ENCODE measurements at regions of chr5 and their contacts with region 1.

Region 1: GRCh38 chr5:431001-431710 is 11.8 kb upstream of the EXOC3 start:
- DNase-seq: peak; percentile 59 to 92
- ATAC-seq: peak; percentile 93 to 98
- H3K4me3 ChIP-seq: no peak overlapping the region
- H3K27ac ChIP-seq: no peak overlapping the region
- H3K4me1 ChIP-seq: no peaks in the 10 kb centered on the region
- CTCF ChIP-seq: peak; percentile 45; the same call in 2 of the 3 replicates
- EP300 ChIP-seq: no peak
- POLR2A ChIP-seq: no peak
- RAD21 ChIP-seq: peak; percentile 57 to 71; a peak in 4 of 5 replicates

Region 2: GRCh38 chr5:308672-309271 is 122.4 kb before region 1 on chr5:
- CTCF ChIA-PET with region 1: interaction called, 11 read pairs
- POLR2A ChIA-PET with region 1: no interaction called
- DNase-seq: peak in 1 of 2 experiments; percentile 29
- ATAC-seq: peak; percentile 67 to 83; a peak in 4 of 6 replicates
- H3K4me3 ChIP-seq: no peak overlapping the region
- H3K27ac ChIP-seq: no peak overlapping the region
- H3K4me1 ChIP-seq: no peaks in the 10 kb centered on the region
- CTCF ChIP-seq: no peak
- EP300 ChIP-seq: no peak
- POLR2A ChIP-seq: no peak
- RAD21 ChIP-seq: no peak

Region 3: DNA sequence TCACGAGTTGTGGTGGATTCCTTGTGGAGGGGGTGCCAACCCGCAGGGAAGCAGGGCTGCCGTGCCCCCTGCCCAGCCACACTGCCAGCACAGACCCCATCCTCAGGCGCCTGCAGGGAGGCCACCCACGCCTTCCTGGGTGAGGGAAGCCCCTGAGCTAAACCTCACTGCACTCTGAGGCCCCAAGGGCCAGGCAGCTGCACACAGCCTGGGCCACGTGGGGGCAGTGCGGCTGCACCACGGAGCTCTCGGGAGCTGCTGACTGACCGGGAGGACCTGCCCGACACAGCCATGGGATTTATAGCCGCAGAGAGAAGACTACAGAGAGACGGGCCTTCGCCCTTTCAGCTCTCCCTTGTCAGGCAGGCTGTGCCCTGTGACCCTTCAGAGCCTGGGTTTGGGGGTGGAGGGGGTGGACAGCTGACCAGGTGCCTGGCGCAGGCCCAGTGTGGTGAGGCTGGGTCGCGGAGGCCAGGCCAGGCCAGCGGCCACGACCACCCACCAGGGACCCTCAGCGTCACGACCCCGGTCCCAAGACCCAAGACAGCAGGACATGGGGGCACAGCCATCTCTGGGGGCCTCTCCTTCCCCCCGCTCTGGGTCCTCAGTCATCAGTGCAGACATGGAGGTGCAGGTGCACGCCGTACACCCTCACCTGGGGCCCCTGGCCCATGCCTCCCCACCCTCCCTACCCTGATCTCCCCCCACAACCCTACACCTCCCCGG is 113.9 kb before region 1 on chr5:
- CTCF ChIA-PET with region 1: interaction called, 186 read pairs
- POLR2A ChIA-PET with region 1: no interaction called
- DNase-seq: peak; percentile 82 to 88
- ATAC-seq: peak; percentile 75 to 90
- H3K4me3 ChIP-seq: no peak overlapping the region
- H3K27ac ChIP-seq: peak overlapping the region; percentile 33 to 87; a peak in 4 of 6 replicates
- H3K4me1 ChIP-seq: peaks cover 24% of the 10 kb centered on the region
- CTCF ChIP-seq: peak; percentile 69
- EP300 ChIP-seq: no peak
- POLR2A ChIP-seq: no peak
- RAD21 ChIP-seq: peak; percentile 81 to 86

Region 4: GRCh38 chr5:337563-338130 is 93.5 kb before region 1 on chr5:
- CTCF ChIA-PET with region 1: interaction called, 29 read pairs
- POLR2A ChIA-PET with region 1: no interaction called
- DNase-seq: peak; percentile 70 to 77
- ATAC-seq: peak; percentile 99 to 100
- H3K4me3 ChIP-seq: no peak overlapping the region
- H3K27ac ChIP-seq: peak overlapping the region in 1 of 2 experiments; percentile 42; a peak in 1 of 6 replicates
- H3K4me1 ChIP-seq: no peaks in the 10 kb centered on the region
- CTCF ChIP-seq: peak; percentile 50
- EP300 ChIP-seq: no peak
- POLR2A ChIP-seq: no peak
- RAD21 ChIP-seq: peak; percentile 14 to 41; a peak in 1 of 5 replicates

Region 5: DNA sequence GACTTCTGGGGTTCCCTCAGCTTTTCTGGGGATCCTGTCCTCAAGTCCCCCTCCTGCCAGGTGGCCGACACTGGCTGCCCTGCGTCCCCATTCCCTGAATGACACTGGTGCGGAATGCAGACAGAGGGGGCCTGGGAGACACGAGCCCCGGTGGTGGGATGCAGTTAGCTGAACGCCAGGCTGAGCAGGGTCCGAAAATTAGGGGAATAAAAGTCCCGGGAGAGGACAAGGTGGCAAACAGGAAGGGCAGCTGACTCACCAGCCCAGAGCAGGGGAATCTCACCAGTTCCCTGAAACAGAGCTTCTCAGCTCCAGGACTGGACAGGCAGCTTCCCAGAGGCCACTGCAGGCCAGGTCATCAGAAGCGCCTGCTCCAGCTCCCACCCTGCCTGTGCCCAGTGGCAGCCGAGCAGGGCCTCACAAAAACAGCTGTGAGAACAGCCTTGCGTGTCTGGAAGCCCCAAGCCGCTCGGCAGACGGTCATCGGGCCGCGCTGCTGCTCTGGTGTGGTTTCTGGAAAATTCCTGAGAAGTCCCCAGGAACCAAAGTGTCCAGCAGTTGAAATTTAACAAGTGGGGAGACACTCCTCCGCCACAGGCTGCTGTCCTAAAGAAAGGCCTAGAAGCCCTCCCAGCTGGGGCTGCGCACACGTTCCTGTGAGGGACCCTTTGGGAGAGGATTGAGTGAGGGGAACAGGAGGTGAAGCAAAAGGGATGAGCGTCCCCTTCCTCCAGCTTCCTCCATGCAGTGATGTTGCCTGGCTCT is 35.8 kb before region 1 on chr5:
- CTCF ChIA-PET with region 1: no interaction called
- POLR2A ChIA-PET with region 1: no interaction called
- DNase-seq: no peak
- ATAC-seq: peak in 1 of 2 experiments; percentile 44; a peak in 3 of 6 replicates
- H3K4me3 ChIP-seq: no peak overlapping the region
- H3K27ac ChIP-seq: peak overlapping the region in 1 of 2 experiments; percentile 60; a peak in 3 of 6 replicates
- H3K4me1 ChIP-seq: peaks cover 25% of the 10 kb centered on the region
- CTCF ChIP-seq: no peak
- EP300 ChIP-seq: no peak
- POLR2A ChIP-seq: no peak
- RAD21 ChIP-seq: no peak

Region 6: DNA sequence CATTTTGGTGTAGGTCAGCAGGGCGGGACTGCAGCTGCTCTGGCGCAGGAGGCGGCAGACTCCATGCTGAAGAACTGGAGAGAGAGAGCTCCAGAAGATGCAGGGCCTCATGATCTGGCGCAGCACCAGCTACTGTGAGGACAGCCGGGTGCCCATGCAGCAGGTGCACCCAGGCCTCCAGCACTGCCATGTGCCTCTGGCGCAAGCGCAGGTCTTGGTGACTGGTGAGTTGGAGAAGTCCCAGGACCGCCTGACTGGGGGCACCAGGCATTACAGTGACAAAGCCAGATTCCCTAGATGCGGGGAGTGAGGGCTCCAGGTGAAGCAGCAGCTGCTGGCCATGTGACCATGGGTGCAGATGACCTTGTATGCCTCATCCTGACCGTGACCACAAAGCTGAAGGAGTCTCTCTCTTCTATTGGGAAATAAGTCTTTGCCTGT is 12.5 kb before region 1 on chr5:
- CTCF ChIA-PET with region 1: interaction called, 15 read pairs
- POLR2A ChIA-PET with region 1: no interaction called
- DNase-seq: no peak
- ATAC-seq: no peak
- H3K4me3 ChIP-seq: no peak overlapping the region
- H3K27ac ChIP-seq: no peak overlapping the region
- H3K4me1 ChIP-seq: peaks cover 5% of the 10 kb centered on the region; the same call in 1 of the 3 replicates
- CTCF ChIP-seq: no peak
- EP300 ChIP-seq: no peak
- POLR2A ChIP-seq: no peak
- RAD21 ChIP-seq: no peak

Region 7: GRCh38 chr5:446864-447263 is 15.7 kb after region 1 on chr5:
- CTCF ChIA-PET with region 1: interaction called, 43 read pairs
- POLR2A ChIA-PET with region 1: no interaction called
- DNase-seq: peak; percentile 60 to 72
- ATAC-seq: peak in 1 of 2 experiments; percentile 60; a peak in 3 of 6 replicates
- H3K4me3 ChIP-seq: no peak overlapping the region
- H3K27ac ChIP-seq: no peak overlapping the region
- H3K4me1 ChIP-seq: peaks cover 13% of the 10 kb centered on the region
- CTCF ChIP-seq: peak; percentile 57
- EP300 ChIP-seq: no peak
- POLR2A ChIP-seq: no peak
- RAD21 ChIP-seq: peak; percentile 18 to 50; a peak in 2 of 5 replicates

Region 8: DNA sequence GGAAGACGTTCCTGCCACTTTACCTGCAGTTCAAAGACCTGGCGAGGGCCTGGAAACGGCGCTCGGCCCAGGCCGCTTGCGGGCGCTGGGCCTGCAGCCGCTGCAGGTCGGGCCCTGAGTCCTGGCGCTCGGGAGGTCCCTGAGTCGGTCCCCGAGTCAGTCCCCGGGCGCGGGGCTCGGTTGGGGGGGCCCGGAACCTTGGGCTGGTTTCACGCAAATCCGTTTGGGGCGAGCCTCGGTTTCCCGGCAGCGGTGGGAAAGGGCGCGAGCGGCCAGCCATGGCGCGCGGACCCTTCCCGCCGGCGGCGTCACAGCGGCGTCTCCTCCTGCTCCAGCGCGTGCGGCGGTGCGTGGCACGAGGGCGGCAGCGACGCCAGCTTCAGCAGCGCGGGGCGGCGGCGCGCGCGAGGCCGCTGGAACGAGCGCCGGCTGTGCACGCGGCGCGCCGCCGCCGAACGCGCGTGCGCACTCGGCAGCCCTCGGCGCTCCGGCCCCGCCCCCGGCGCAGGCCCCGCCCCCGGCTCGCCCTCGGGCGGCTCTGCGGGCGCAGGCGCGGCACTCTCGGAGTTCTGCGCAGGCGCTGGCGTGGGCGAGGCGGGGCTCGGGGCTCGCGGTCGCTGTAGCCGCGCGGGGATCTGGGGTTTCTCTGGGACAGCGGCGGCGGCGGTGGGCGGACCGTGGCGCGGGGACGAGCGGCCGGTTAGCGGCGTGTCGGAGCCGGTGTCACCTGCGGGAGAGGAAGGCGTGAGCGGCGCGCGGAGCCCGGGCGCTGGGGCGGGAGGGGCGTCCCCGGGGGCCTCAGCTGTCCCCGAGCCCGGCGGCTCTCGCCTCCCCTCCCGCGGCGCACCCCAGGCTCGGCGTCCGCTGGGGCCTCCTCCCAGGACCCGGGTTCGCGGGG is 41.7 kb after region 1 on chr5:
- CTCF ChIA-PET with region 1: no interaction called
- POLR2A ChIA-PET with region 1: no interaction called
- DNase-seq: peak; percentile 76 to 84
- ATAC-seq: peak; percentile 45 to 57
- H3K4me3 ChIP-seq: peak overlapping the region; percentile 74
- H3K27ac ChIP-seq: peak overlapping the region; percentile 77 to 94
- H3K4me1 ChIP-seq: peaks cover 16% of the 10 kb centered on the region
- CTCF ChIP-seq: no peak
- EP300 ChIP-seq: no peak
- POLR2A ChIP-seq: peak; percentile 86
- RAD21 ChIP-seq: no peak

Region 9: GRCh38 chr5:1268666-1269065 is 837.5 kb after region 1 on chr5:
- CTCF ChIA-PET with region 1: no interaction called
- POLR2A ChIA-PET with region 1: no interaction called
- DNase-seq: no peak
- ATAC-seq: no peak
- H3K4me3 ChIP-seq: no peak overlapping the region
- H3K27ac ChIP-seq: no peak overlapping the region
- H3K4me1 ChIP-seq: no peaks in the 10 kb centered on the region
- CTCF ChIP-seq: no peak
- EP300 ChIP-seq: no peak
- POLR2A ChIP-seq: no peak
- RAD21 ChIP-seq: no peak